Right ventricle myocardium inferior (tissue), 1 donor: ENCODE measurements at regions of chr14 and their contacts with region 1.

Region 1: DNA sequence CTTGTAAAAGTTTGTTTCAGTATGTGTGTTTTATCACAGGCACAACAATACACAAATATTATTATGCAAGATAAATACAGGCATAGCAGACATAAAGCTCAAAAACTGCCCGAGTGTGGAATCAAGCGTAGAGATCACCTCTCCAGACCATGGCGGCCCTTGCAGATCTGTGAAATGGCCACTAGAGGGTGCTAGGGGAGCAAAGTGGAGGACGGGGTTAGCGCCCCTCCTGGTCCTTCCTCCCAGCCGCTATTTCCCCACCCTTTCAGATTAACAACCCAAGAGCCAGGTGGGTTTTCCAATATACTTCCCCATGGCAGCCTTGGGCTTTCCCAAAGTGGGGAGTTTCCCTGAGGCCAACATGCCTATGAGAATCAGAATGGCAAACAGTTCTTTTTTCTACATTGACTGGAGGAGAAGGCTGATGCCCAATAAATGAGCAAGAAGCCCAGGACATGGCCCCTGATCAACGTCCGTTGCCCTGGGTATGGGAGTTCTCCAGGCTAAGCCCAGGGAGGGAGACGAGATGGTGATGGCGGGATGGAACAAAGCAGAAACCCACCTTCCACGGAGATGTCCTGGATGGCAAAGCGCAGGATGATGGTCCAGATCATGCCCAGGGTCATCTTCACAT is 67.4 kb downstream of the ACTN1 start:
- DNase-seq: peak; percentile 79
- ATAC-seq: peak; percentile 89

Region 2: GRCh38 chr14:68854421-68854820 is 57.3 kb before region 1 on chr14:
- intact Hi-C with region 1: no loop called
- DNase-seq: no peak
- ATAC-seq: no peak

Region 3: GRCh38 chr14:68979021-68979782 is 67.5 kb after region 1 on chr14 and contains the start of gene ACTN1:
- intact Hi-C with region 1: loop called (anchors 2 kb)
- DNase-seq: peak; percentile 97
- ATAC-seq: peak; percentile 90
- total RNA-seq, gene ACTN1: 136 TPM

Region 4: GRCh38 chr14:69002069-69002468 is 90.4 kb after region 1 on chr14:
- intact Hi-C with region 1: loop called (anchors 1 kb)
- DNase-seq: no peak
- ATAC-seq: peak; percentile 90

Region 5: DNA sequence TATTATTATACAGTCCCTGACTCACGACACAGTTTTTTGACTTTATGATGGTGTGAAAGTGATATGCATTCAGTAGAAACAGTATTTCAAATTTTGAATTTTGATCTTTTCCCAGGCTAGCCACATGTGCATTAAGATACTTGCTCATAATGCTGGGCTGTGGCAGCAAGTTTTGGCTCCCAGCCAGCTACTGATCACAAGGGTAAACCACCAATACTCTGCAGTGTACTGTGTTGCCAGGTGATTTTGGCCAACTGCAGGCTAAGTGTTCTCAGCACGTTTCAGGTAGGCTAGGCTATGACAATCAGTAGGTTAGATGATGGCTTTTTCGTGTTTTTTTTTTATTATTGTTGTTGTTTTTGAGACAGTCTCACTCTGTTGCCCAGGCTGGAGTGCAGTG is 136.7 kb after region 1 on chr14:
- intact Hi-C with region 1: loop called (anchors 5 kb)
- DNase-seq: no peak
- ATAC-seq: no peak

Region 6: GRCh38 chr14:69090187-69090789 is 178.6 kb after region 1 on chr14:
- intact Hi-C with region 1: loop called (anchors 5 kb)
- DNase-seq: no peak
- ATAC-seq: no peak

Region 7: DNA sequence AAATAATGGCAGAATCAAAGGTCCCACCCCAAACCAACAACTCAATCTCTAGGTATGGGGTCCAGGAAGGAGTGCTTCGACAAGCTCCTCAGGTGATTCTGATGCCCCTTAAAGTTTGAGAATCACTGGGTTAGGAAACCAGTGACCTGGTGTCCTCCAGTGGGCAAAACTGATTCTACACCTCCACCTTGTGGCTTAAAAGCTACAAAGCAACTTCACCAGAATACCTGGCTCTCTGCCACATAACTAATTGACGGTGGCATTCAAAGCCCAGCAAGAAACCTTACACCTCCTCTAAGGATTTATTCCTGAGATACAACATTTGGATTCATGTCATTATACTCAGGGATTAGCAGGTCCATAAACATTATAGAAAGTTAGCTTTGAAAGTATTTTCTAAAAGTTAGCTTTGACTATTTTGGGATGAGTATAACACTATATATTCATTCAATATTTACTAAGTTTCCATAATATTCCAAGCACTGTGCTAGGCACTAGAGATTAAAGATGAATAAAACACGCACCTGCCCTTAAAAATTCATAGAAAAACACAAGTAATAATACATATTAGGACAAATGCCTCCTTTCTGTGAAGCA is 195.8 kb after region 1 on chr14:
- intact Hi-C with region 1: loop called (anchors 5 kb)
- DNase-seq: no peak
- ATAC-seq: peak; percentile 34